Psoas muscle (tissue), 8 donors: ENCODE measurements at regions of chr15 and their contacts with region 1.

Region 1: DNA sequence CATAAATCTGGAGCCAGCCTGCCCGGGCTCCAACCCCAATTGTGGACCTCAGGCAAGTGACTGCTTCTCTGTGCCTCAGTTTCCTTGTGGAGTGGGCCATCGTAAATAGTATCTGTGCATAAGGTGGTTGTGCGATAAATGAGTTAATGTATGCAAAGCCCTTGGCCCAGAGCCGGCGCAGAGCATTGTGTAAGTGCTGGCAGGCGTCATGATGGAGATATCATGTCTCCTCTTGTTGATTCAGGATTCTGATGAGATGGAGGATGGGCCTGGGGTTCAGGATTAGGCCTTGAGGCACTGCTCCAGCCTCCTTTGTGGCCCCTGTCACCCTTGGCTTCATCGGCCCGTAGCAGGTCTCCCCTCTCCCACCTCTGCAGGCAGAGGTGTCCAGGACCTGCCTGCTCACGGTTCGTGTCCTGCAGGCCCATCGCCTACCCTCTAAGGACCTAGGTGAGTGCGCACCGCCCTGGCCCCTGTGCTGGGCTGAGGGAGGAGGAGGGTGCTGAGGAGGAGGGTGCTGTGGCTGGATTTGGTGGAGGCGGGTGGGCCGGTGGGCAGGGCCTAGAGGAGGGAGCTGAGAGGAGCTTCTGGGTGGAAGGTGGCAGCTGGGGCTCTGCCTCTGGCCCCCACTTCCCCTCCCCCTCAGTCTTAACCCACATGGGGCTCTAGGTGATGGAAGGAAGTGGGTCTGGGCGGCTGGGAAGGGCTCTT is 1.3 kb downstream of the PLA2G4B start:
- DNase-seq: no peak
- ATAC-seq: no peak
- H3K4me3 ChIP-seq: no peak overlapping the region
- H3K27ac ChIP-seq: no peak overlapping the region
- H3K4me1 ChIP-seq: peaks cover 18% of the 10 kb centered on the region
- H3K27me3 ChIP-seq: no peaks in the 10 kb centered on the region
- CTCF ChIP-seq: no peak

Region 2: DNA sequence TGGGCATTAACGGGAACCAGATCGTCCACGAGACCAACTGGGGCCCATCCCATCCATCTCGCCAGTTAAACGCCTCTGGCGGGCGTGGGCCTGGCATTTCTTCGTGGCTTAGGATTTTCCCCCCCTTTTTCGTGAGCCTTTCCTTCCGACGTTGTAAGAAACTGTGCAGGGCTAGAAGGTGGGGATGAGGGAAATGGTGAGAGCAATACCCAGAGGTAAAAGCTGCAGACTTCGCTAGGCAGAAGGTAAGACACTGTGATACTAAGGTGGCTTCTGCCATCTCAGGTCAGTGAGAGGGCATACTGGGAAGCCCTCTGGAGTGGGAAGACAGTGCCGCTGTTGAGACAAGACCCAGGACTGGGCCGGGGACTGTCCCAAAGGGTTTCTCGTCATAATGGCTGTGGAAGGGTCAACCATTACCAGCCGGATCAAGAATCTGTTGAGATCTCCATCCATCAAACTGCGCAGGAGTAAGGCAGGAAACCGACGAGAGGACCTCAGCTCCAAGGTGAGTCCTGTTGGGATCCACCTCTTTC is 65.0 kb before region 1 on chr15:
- intact Hi-C with region 1: no loop called
- DNase-seq: no peak
- ATAC-seq: peak in 1 of 4 donors; percentile 5
- H3K4me3 ChIP-seq: peak overlapping the region; percentile 90
- H3K27ac ChIP-seq: peak overlapping the region; percentile 86
- H3K4me1 ChIP-seq: peaks cover 40% of the 10 kb centered on the region
- H3K27me3 ChIP-seq: no peaks in the 10 kb centered on the region
- CTCF ChIP-seq: no peak

Region 3: DNA sequence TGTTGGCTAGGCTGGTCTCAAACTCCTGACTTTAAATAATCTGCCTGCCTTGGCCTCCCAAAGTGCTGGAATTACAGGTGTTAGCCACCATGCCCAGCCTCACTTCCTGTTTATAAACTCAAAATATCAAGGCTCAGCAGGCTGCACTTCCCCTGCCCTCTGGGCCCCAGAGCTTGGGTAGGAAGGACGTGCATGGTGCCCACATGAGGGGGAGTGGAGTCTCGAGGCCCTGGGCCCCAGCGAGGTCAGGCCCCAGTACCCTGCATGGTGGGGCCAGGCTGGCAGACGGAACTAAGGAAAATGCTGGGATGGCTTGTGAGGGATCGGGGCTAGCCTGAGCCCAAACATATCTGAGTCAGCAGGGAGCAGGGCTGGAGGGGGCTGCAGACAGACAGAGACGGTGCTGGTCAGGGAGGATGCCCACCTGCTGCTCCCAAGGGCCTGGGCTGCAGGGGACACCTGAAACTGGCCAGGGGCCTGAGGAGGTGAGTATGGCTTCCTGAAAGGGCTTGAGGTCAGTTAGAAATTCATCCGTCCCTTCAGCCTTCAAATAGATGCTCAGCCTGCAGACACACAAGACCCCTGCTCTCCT is 48.8 kb after region 1 on chr15:
- intact Hi-C with region 1: loop called in 1 of 2 experiments (anchors 5 kb)
- DNase-seq: peak in 1 of 2 donors; percentile 25
- ATAC-seq: no peak
- H3K4me3 ChIP-seq: no peak overlapping the region
- H3K27ac ChIP-seq: no peak overlapping the region
- H3K4me1 ChIP-seq: peaks cover 1% of the 10 kb centered on the region
- H3K27me3 ChIP-seq: no peaks in the 10 kb centered on the region
- CTCF ChIP-seq: no peak